A673 (cell line): ENCODE measurements at regions of chr5 and their contacts with region 1.

Region 1: DNA sequence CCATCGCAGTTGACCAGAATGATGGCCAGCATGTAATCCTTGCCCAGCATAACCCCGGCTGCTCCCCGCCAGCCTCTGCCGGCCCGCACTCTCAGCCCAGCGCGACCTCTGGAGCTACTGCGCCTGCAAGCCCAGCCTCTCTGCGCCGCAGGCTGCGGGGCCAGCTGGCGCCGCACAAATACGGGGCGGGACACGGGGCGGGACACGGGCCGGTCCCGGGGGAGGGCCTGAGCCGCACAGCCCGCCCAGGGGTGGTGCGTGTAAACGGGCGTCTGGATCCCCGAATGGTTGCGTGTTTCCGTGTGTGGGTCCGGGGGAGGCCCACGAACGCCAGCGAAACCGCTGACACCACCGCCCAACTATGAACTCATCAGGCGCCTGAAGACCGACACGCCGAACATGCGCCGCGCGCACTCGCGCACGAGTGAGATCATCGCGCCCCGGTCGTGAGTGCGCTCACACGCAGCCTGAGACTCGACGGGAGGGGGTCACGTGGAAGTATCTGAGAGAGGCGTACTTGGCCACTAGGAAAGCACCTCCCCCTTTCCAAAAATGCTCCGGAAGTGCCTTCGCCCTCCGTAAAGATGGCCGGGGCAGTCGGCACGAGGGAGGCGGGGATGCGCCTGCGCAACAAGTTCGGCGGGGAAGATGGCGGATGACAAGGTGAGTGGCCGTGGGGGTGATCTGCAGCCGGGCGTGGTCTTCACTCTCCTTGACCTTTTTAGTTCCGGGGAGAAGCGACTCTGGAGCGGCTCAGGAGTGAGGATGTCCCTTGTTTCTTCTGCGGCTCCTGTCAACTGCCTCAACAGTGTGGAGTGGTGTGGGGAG is at the starts of genes APBB3 and SLC35A4:
- DNase-seq: peak; percentile 99
- H3K4me3 ChIP-seq: peak within 1 kb of the TSS; percentile 66
- H3K27ac ChIP-seq: peak within 1 kb of the TSS; percentile 92
- H3K4me1 ChIP-seq: peaks cover 15% of the 10 kb centered on the region
- H3K27me3 ChIP-seq: no peaks in the 10 kb centered on the region
- CTCF ChIP-seq: no peak
- total RNA-seq, gene APBB3: 27.8 and 30.2 TPM in 2 replicates
- total RNA-seq, gene SLC35A4: 99.6 and 101 TPM in 2 replicates

Region 2: GRCh38 chr5:140547508-140548299 is 16.7 kb before region 1 on chr5 and contains the start of gene EIF4EBP3:
- CTCF ChIA-PET with region 1: no interaction called
- POLR2A ChIA-PET with region 1: no interaction called
- intact Hi-C with region 1: no loop called
- DNase-seq: peak; percentile 93
- H3K4me3 ChIP-seq: peak within 1 kb of the TSS; percentile 30
- H3K27ac ChIP-seq: peak within 1 kb of the TSS; percentile 65
- H3K4me1 ChIP-seq: peaks cover 10% of the 10 kb centered on the region
- H3K27me3 ChIP-seq: no peaks in the 10 kb centered on the region
- CTCF ChIP-seq: peak; percentile 49
- total RNA-seq, gene EIF4EBP3: 5.6 and 7.6 TPM in 2 replicates

Region 3: GRCh38 chr5:140639148-140639979 is 75.0 kb after region 1 on chr5 and contains the start of gene TMCO6:
- CTCF ChIA-PET with region 1: no interaction called
- POLR2A ChIA-PET with region 1: no interaction called
- intact Hi-C with region 1: loop called (anchors 5 kb)
- DNase-seq: peak; percentile 97
- H3K4me3 ChIP-seq: peak within 1 kb of the TSS; percentile 91
- H3K27ac ChIP-seq: peak within 1 kb of the TSS; percentile 93
- H3K4me1 ChIP-seq: peaks cover 17% of the 10 kb centered on the region
- H3K27me3 ChIP-seq: no peaks in the 10 kb centered on the region
- CTCF ChIP-seq: peak; percentile 72
- total RNA-seq, gene TMCO6: 24.1 and 26.5 TPM in 2 replicates

Region 4: GRCh38 chr5:141121563-141121962 is 557.2 kb after region 1 on chr5 and contains the start of gene PCDHB4:
- CTCF ChIA-PET with region 1: no interaction called
- POLR2A ChIA-PET with region 1: interaction called, 15 read pairs
- intact Hi-C with region 1: no loop called
- DNase-seq: peak; percentile 22
- H3K4me3 ChIP-seq: no peak within 1 kb of the TSS
- H3K27ac ChIP-seq: no peak within 1 kb of the TSS
- H3K4me1 ChIP-seq: no peaks in the 10 kb centered on the region
- H3K27me3 ChIP-seq: no peaks in the 10 kb centered on the region
- CTCF ChIP-seq: peak; percentile 50
- total RNA-seq, gene PCDHB4: 2.4 and 2.7 TPM in 2 replicates